ENCODE measurements at regions of chr3 and their contacts with region 1.

Region 1: DNA sequence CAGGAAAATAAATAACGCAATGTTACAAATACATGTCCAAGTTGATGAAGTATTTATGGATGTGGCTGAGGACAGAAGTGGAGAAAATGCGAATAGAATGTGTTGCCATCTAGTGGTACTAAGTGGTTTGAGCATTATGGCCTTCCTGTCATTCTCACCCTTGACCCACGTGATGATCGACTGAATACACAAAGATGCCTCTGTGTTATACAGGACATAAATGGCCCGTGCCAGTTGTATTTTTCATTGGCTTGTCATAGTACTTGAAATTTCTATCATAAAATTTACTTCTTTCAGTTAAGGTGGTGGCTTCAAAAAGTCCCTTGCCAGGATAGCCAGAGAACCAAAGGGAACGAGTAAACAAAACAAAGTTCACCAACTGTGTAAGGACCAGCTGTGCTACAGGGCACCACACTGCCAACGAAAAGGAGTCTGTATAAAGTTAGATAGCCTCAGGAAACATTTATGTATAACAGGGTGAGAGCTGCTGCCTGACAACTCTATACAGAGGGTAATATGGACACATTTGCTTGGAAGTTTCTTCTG is 103.7 kb downstream of the MYH15 start:
- DNase-seq: peak in 2 of 10 donors; percentile 16 to 71
- H3K4me3 ChIP-seq: peak overlapping the region in 2 of 59 donors; percentile 3 to 16
- H3K27ac ChIP-seq: peak overlapping the region in 35 of 59 donors; percentile 2 to 81 (median 52)
- H3K27me3 ChIP-seq: no peaks in the 10 kb centered on the region
- CTCF ChIP-seq: peak in 52 of 56 donors; percentile 18 to 90 (median 77)

Region 2: DNA sequence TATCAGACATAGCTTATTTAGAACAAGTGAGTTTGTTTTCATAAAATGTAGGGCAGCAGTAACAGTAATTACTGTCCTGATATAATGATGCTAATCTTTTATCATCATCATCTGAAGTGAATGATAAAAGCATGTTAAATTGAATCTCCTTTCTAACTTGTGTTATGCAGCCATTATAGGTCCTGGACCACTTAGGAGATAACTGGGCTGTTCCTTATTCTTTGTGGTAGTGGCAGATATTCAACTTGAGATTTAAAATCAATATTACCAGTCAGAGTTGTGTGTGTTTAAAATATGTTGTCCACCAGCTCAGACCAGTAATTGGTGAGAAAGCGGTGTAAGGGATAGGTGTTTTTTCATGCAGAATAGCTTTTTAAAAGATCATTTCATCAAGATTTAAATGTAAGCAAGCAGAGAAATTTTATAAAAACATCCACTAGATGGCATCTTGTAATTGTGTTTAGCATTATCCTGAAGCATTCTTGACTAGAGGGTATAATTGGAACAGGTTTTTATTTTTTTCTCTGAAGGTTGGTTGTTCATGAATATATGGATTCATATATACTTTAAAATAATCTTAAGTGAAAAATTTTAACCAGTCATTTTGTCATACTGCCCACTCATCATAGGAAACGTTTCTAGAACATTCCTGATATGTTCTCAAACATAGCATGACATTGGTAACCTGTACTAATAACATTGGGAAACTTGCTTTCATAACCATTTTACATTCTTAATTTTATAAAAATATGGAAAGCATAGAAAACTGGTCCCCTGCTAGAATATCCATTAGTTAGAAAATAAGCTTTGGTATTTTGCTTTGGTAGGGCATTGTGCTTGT is 730.0 kb before region 1 on chr3:
- intact Hi-C with region 1: loop called in 1 of 2 experiments (anchors 10 kb)
- DNase-seq: no peak
- H3K4me3 ChIP-seq: no peak overlapping the region
- H3K27ac ChIP-seq: peak overlapping the region in 9 of 59 donors; percentile 1 to 75 (median 55)
- H3K27me3 ChIP-seq: no peaks in the 10 kb centered on the region
- CTCF ChIP-seq: peak; percentile 44 to 90 (median 74)

Region 3: GRCh38 chr3:108036984-108037741 is 369.6 kb before region 1 on chr3:
- intact Hi-C with region 1: loop called in 1 of 2 experiments (anchors 10 kb)
- DNase-seq: peak in 1 of 10 donors; percentile 62
- H3K4me3 ChIP-seq: no peak overlapping the region
- H3K27ac ChIP-seq: peak overlapping the region in 40 of 59 donors; percentile 1 to 78 (median 28)
- H3K27me3 ChIP-seq: no peaks in the 10 kb centered on the region
- CTCF ChIP-seq: no peak

Region 4: GRCh38 chr3:108221911-108222852 is 184.6 kb before region 1 on chr3 and contains the start of gene IFT57:
- intact Hi-C with region 1: loop called (anchors 10 kb)
- DNase-seq: peak; percentile 97 to 99 (median 99)
- H3K4me3 ChIP-seq: peak within 1 kb of the TSS; percentile 70 to 98 (median 86)
- H3K27ac ChIP-seq: peak within 1 kb of the TSS in 58 of 59 donors; percentile 11 to 90 (median 76)
- H3K27me3 ChIP-seq: no peaks in the 10 kb centered on the region
- CTCF ChIP-seq: peak in 17 of 56 donors; percentile 9 to 44 (median 23)
- total RNA-seq, gene IFT57: 22.4 to 63.6 (median 43.7) TPM

Region 5: GRCh38 chr3:108472001-108472591 is 65.4 kb after region 1 on chr3:
- intact Hi-C with region 1: loop called (anchors 5 to 10 kb)
- DNase-seq: peak in 2 of 10 donors; percentile 42 to 53
- H3K4me3 ChIP-seq: no peak overlapping the region
- H3K27ac ChIP-seq: peak overlapping the region in 4 of 59 donors; percentile 3 to 68 (median 47)
- H3K27me3 ChIP-seq: no peaks in the 10 kb centered on the region
- CTCF ChIP-seq: no peak

Region 6: DNA sequence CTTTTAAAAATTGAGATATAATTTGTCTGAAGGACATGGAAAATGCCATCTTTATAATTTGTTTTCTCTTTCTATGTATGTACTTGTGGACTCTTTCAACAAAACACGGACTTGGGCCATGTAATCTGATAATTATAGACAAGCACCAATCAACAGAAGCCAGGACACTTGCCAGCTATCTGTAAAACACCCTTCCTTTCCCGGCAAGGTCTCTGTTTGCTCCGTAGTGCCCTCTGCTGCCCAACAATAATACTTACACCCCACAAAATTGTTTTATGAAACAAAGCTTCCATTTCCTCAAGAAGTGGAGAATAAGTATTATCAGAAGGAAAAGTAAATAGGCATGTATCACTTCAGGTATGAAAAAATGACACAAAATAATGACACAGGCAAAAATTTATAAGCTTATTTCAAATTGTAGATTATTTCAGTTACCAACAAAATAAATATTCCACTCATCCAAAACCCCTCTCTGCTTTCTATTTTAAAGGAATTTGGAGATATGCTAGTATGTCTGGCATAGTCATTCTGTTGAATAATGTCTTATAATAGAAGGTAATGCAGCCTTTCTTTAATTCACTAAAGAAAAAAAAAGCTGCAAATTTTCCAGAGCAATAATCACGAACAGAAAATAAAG is 70.9 kb after region 1 on chr3:
- intact Hi-C with region 1: loop called (anchors 5 to 10 kb)
- DNase-seq: peak in 5 of 10 donors; percentile 17 to 50 (median 35)
- H3K4me3 ChIP-seq: peak overlapping the region in 23 of 59 donors; percentile 4 to 49 (median 20)
- H3K27ac ChIP-seq: no peak overlapping the region
- H3K27me3 ChIP-seq: no peaks in the 10 kb centered on the region
- CTCF ChIP-seq: peak; percentile 49 to 89 (median 76)